ENCODE measurements at regions of chr11 and their contacts with region 1.

Region 1: DNA sequence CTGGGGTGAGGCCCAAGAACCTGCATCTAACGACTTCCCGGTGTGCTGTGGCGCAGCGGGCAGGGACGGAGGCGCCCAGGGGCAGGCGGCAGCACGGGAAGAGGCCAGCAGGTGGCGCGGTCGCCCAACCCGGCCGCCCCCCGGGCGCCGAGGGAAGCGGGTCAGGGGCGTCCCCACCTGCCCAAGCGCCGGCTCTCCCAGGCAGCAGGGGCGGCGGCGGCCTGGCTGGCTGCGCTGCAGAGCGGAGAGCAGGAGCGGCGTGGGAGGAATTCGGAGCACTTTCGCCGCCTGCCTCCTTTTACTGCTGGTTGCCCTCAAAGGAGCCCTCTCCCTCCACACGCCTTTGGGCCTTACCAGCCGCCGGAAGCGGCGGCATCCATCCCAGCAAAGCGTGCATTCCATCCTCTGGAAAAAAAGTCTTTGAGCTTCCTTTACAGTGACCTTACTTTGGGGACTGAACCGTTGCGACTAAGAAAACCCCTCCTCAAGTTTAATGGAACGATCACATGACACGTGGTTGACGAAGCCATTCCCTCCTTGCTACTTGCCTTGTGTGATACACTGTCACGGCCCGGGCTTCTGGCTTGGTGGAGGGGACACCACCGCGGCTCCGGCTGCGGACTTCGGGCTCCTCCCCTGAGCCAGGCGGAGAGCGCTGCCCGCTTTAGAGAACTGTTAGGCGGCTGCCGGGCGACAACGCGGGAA is 106.8 kb upstream of the CLMP start:
- DNase-seq: peak; percentile 90
- ATAC-seq: peak; percentile 75
- H3K4me3 Mint-ChIP-seq: peak overlapping the region; percentile 50
- H3K27ac Mint-ChIP-seq: peak overlapping the region; percentile 80
- H3K4me1 Mint-ChIP-seq: peaks cover 43% of the 10 kb centered on the region
- H3K27me3 Mint-ChIP-seq: no peaks in the 10 kb centered on the region

Region 2: DNA sequence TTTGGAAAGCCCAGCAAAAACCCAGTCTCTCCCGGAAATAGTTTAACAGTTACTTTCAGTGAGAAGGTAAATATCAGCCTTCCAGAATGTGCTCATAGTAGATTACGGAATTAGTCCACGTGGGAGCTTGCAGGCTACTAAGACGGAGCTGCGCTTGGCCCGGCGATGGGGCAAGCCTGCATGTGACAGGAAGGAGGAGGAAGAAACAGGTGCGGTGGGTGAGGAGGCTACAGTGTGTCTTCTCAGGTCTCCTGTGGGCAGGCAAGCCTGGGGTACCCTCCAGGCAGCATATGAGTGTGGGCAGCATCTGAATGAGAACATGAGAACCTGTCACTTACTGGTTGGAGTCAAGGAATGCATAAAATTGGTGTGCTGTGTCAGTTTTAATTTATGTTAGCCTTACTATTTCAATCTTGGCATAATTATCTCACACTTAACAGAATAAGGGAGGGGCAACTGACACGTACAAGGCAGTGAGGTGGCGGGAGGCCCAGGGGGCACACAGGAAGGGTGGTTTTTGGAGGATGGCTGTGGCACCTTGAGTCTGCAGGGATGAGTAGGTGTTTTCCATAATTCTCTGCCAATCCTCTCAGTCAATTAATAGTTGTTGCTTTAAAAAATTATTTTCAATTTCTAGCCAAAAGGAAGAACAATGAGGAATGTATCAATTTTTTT is 142.5 kb before region 1 on chr11:
- CTCF ChIA-PET with region 1: no interaction called
- POLR2A ChIA-PET with region 1: no interaction called
- intact Hi-C with region 1: no loop called
- DNase-seq: peak; percentile 63
- ATAC-seq: peak; percentile 70
- H3K4me3 Mint-ChIP-seq: no peak overlapping the region
- H3K27ac Mint-ChIP-seq: no peak overlapping the region
- H3K4me1 Mint-ChIP-seq: peaks cover 13% of the 10 kb centered on the region
- H3K27me3 Mint-ChIP-seq: no peaks in the 10 kb centered on the region

Region 3: DNA sequence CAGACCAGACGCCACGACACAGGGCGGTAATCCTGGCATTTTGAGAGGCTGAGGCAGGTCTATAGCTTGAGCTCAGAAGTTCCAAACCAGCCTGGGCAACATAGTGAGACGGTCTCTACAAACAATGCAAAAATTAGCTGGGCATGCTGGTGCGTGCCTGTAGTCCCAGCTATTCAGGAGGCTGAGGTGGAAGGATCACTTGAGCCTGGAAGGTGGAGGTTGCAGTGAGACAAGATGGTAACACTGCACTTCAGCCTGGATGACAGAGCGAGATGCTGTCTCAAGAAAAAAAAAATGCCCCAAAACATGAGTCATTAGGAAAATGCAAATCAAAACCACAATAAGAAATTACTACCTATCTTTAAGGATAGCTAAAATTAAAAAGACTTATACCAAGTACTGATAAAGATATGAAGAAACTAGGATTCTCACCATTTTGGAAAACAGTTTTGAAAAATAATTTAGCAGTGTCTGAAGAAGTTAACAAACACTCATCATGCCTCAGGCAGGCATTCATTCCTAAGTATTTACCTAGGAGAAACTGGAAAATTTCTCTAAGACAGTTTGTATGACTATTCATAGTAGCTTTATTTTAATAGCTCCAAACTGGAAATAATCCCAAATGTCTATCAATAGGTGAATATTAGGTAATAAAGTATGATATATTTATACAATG is 36.6 kb after region 1 on chr11:
- CTCF ChIA-PET with region 1: interaction called, 4 read pairs
- POLR2A ChIA-PET with region 1: no interaction called
- intact Hi-C with region 1: loop called (anchors 2 kb)
- DNase-seq: peak; percentile 27
- ATAC-seq: peak; percentile 66
- H3K4me3 Mint-ChIP-seq: no peak overlapping the region
- H3K27ac Mint-ChIP-seq: no peak overlapping the region
- H3K4me1 Mint-ChIP-seq: peaks cover 8% of the 10 kb centered on the region
- H3K27me3 Mint-ChIP-seq: peaks cover 17% of the 10 kb centered on the region

Region 4: DNA sequence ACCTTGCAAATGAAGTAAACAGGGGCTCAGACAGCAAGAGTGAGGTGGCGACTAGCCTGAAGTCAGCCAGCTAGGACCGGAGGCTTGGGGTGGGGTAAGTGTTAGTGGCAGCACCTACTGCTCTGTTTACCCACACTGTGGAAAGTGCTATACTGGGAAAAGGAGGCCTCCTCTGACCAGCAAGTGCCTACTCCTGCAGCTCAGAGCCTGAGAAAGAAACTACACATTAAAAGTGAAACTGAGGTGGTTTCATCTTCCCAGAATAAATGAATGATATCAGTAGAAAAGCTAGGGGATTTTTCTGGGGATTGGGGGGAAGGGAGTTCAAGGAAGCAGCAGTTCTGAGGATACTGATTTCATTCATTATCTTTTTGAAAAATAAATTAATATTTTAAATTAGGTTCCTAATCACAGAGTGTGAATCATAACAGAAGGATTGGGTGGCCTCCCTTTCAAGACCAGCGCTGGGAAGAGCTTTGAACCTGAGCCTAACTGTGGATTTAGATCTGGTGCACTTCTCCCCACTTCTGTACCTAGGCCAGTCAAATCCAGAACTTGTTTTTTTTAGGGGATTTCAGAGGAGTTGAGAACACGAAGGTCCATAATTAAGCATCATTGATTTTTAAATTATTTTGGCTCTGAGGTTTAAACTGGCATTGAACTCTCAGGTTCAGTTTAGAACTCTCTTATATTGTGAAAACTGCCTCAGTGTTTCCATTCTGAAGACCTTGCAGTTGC is 80.1 kb after region 1 on chr11:
- CTCF ChIA-PET with region 1: interaction called, 10 read pairs
- POLR2A ChIA-PET with region 1: no interaction called
- intact Hi-C with region 1: loop called (anchors 1 kb)
- DNase-seq: peak; percentile 81
- ATAC-seq: peak; percentile 91
- H3K4me3 Mint-ChIP-seq: no peak overlapping the region
- H3K27ac Mint-ChIP-seq: peak overlapping the region; percentile 78
- H3K4me1 Mint-ChIP-seq: peaks cover 29% of the 10 kb centered on the region
- H3K27me3 Mint-ChIP-seq: peaks cover 4% of the 10 kb centered on the region

Region 5: GRCh38 chr11:123429913-123430720 is 128.3 kb after region 1 on chr11 and contains the start of gene GRAMD1B:
- CTCF ChIA-PET with region 1: interaction called, 10 read pairs
- POLR2A ChIA-PET with region 1: no interaction called
- intact Hi-C with region 1: loop called (anchors 1 kb)
- DNase-seq: peak; percentile 90
- ATAC-seq: peak; percentile 68
- H3K4me3 Mint-ChIP-seq: peak within 1 kb of the TSS; percentile 76
- H3K27ac Mint-ChIP-seq: peak within 1 kb of the TSS; percentile 79
- H3K4me1 Mint-ChIP-seq: peaks cover 39% of the 10 kb centered on the region
- H3K27me3 Mint-ChIP-seq: no peaks in the 10 kb centered on the region
- total RNA-seq, gene GRAMD1B: 38.6 to 45.7 TPM

Region 6: DNA sequence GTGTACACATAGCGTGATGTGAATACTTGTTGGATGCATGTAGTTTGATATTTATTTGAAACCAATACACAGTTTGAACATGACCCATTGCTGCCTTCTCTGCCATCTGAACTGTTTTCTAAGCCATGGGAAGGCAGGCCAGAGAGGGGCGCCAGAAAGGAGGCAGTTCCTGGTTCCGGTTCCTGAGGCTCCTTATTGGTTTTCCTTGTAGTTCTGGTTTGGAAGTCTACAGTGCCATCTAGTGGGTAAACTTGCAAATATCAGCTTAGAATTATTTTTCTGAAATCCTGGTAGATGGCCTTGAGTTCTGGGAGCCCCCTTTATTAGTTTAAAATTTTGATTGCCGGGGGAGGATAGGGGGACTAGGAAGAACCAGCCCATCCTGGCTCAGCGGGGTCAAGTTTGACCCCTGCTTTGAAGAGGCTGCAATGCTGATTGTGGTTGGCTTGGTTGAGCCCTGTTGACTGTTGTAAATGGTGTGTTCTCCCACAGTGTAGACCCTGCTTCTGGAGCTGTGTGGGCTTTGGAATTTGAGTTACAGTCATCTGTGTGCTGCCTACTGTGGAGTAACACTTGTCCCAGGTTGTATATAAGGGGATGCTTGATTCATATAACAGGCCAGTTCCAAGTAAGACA is 176.6 kb after region 1 on chr11:
- CTCF ChIA-PET with region 1: interaction called, 22 read pairs
- POLR2A ChIA-PET with region 1: no interaction called
- intact Hi-C with region 1: loop called (anchors 1 kb)
- DNase-seq: peak; percentile 40
- ATAC-seq: peak; percentile 22
- H3K4me3 Mint-ChIP-seq: no peak overlapping the region
- H3K27ac Mint-ChIP-seq: peak overlapping the region; percentile 32
- H3K4me1 Mint-ChIP-seq: peaks cover 36% of the 10 kb centered on the region
- H3K27me3 Mint-ChIP-seq: no peaks in the 10 kb centered on the region

Region 7: DNA sequence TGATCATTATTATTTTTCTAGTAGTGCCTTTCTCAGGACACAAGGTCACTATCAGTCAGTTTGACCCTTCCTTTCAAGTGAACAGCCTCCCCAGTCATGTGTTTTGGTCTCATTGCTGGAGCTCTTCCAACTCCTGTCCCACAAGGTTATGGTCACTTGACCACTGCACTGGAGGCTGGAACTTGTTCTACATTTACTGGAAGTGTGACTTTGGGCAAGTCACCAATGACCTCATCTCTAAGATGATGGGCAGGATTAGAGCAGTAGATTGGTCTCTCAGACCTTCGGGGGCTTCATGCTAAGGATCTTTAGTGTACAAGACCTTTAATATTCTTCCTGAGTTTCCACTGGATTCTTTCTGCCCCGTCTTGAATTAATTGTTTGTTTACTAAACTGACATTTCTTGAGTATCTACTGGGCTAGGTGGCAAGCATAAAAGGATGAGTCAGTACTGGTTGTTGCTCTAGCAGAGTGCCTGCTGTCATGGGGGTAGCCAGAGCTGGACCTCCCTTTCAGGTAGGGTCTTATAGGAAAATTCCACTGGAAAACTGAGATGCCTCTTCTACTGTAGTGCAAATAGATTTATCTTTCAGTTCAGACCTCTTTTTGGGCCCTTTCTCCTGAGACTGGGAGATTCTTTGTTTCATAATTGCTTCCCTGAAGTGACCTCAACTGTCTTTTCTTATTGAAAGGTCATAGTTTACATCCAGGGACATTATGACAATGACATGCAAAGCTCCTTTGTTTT is 235.0 kb after region 1 on chr11:
- CTCF ChIA-PET with region 1: no interaction called
- POLR2A ChIA-PET with region 1: no interaction called
- intact Hi-C with region 1: no loop called
- DNase-seq: no peak
- ATAC-seq: no peak
- H3K4me3 Mint-ChIP-seq: no peak overlapping the region
- H3K27ac Mint-ChIP-seq: no peak overlapping the region
- H3K4me1 Mint-ChIP-seq: peaks cover 4% of the 10 kb centered on the region
- H3K27me3 Mint-ChIP-seq: no peaks in the 10 kb centered on the region

Region 8: DNA sequence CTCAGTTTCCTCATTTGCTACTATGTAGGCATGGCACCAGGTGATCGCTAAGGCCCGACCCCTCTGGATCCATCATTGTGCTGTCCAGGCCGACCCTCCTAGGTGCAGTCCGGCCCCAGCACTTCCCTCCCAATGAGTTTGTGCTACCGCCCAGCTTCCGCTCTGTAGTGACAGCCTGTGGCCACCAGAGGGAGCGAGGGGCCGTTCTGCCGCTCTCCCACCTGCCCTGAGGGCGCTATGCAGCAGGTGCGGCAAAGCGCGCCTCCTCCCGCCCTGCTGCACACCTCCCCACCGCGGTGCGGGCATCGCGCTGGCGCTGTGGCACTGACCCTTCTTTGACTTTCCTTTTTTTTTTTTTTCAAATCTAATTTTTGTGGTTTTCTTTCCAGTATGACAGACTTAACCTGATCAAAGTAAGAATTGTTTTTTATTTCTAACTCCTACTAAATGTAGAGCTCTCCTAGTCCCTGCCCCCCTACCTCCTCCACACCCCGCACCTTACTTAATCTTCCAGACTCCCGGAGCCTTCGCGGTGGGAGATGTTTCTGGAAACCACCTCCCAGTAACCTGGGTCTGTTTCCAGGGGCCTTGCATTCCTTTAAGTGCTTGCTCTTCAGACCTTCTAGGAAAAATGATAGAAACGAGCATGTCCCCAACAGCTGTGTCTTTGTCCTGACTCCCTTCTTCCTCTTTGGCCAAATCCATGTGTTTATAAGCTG is 278.9 kb after region 1 on chr11:
- CTCF ChIA-PET with region 1: interaction called, 5 read pairs
- POLR2A ChIA-PET with region 1: no interaction called
- intact Hi-C with region 1: loop called in 1 of 2 experiments (anchors 2 kb)
- DNase-seq: peak; percentile 84
- ATAC-seq: peak; percentile 89
- H3K4me3 Mint-ChIP-seq: no peak overlapping the region
- H3K27ac Mint-ChIP-seq: no peak overlapping the region
- H3K4me1 Mint-ChIP-seq: peaks cover 10% of the 10 kb centered on the region
- H3K27me3 Mint-ChIP-seq: no peaks in the 10 kb centered on the region

Measured in activated CD4-positive, alpha-beta T cell treated with anti-CD3 and anti-CD28 coated beads for 36 hours (primary cell).